T-cell (primary cell): ENCODE measurements at regions of chr3 and their contacts with region 1.

Region 1: DNA sequence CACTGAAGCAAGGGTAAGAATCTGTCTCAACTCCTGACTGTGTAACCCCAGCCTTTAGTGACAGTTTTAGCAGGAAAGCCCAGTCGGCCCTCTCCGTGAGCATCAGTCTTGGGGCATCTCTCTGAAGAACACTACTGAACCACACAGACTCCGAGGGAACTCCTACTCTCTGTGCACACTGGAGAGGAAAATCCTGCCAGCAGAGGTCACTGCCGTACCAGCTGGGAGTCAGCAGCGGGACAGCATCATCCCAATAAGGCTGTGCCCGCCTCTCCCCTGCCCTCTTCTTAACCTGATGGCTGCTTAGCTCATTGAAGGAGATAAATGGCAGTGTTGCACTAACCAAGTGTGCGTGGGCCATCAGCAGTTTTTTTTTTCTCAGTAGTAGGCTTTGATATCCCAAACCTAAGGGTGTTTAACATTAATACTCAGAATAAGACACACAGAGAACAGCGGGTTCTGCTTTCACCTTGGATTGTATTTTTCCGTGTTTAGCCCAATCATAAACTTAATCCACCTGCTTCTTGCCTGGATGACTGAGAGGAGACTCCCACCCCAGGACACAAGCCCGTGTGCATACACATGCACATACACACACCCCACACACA is 26.6 kb upstream of the RASA2 start:
- DNase-seq: peak; percentile 71 to 92 (median 85)
- ATAC-seq: peak; percentile 98 to 100 (median 100)
- H3K4me3 ChIP-seq: no peak overlapping the region
- H3K4me3 Mint-ChIP-seq: no peak overlapping the region
- H3K27ac ChIP-seq: no peak overlapping the region
- H3K27ac Mint-ChIP-seq: no peak overlapping the region
- H3K4me1 ChIP-seq: peaks cover 0 to 7% of the 10 kb centered on the region in 2 experiments
- H3K4me1 Mint-ChIP-seq: peaks cover 4 to 11% (median 7%) of the 10 kb centered on the region in 3 donors
- H3K27me3 ChIP-seq: peaks cover 0 to 6% of the 10 kb centered on the region in 2 experiments
- H3K27me3 Mint-ChIP-seq: no peaks in the 10 kb centered on the region

Region 2: DNA sequence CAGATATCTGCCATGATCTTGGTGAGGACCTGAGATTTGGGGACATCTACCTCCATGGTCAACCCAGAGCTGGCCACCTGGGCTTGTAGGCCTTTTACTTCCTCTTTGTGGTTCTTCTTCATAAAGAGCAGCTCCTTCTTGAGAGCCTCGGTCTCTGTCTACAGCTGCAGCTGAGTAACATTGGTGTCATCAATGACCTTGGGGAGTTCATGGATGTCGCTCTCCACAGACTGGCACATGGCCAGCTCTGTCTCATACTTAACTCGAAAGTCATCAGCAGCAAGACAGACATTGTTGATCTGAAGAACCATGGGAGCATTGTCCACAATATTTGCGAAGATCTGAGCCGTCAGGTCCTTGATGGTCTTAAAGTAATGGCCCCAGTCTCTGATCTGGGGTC is 11.0 kb after region 1 on chr3:
- CTCF ChIA-PET with region 1: interaction called, 3 to 15 read pairs
- POLR2A ChIA-PET with region 1: no interaction called
- DNase-seq: no peak
- ATAC-seq: no peak
- H3K4me3 ChIP-seq: no peak overlapping the region
- H3K4me3 Mint-ChIP-seq: no peak overlapping the region
- H3K27ac ChIP-seq: no peak overlapping the region
- H3K27ac Mint-ChIP-seq: no peak overlapping the region
- H3K4me1 ChIP-seq: peaks cover 4 to 5% of the 10 kb centered on the region in 2 experiments
- H3K4me1 Mint-ChIP-seq: peaks cover 14 to 20% (median 18%) of the 10 kb centered on the region in 3 donors
- H3K27me3 ChIP-seq: no peaks in the 10 kb centered on the region
- H3K27me3 Mint-ChIP-seq: no peaks in the 10 kb centered on the region